GM10248 (cell line): ENCODE measurements at regions of chr4 and their contacts with region 1.

Region 1: GRCh38 chr4:15457406-15458201 is 12.1 kb upstream of the CC2D2A start:
- DNase-seq: peak; percentile 28
- CTCF ChIP-seq: peak; percentile 63

Region 2: GRCh38 chr4:15231265-15232091 is 226.1 kb before region 1 on chr4:
- CTCF ChIA-PET with region 1: interaction called, 32 read pairs
- POLR2A ChIA-PET with region 1: no interaction called
- DNase-seq: peak; percentile 61
- CTCF ChIP-seq: peak; percentile 69

Region 3: DNA sequence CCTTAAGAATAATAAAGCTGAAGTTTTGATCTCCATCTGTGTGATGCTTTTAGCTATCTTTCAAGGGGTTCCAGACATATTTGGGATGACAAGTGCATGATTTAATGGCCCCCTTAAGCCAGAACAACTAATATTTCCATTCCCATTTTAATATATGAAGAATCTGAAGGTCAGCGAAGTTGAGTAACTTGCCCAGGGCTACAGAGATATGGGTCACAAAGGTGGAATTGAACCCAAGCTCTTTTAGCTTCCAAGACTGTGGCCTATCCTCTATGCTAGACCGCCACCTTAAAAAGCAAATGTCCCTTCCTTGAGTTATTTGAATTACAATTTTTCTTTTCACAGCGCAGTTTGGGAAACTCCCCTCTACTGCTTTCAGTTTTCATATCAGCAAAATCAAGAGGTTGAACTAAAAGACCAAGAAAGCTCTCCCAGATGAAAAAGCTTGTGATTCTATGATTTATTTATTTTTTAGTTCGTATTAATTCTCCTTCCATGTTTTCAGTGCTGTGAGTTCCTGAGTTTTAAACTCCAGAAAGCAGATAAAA is 204.3 kb before region 1 on chr4:
- CTCF ChIA-PET with region 1: interaction called, 12 read pairs
- POLR2A ChIA-PET with region 1: no interaction called
- DNase-seq: peak; percentile 56
- CTCF ChIP-seq: no peak

Region 4: GRCh38 chr4:15427161-15427560 is 30.4 kb before region 1 on chr4:
- CTCF ChIA-PET with region 1: interaction called, 15 read pairs
- POLR2A ChIA-PET with region 1: no interaction called
- DNase-seq: no peak
- CTCF ChIP-seq: no peak

Region 5: DNA sequence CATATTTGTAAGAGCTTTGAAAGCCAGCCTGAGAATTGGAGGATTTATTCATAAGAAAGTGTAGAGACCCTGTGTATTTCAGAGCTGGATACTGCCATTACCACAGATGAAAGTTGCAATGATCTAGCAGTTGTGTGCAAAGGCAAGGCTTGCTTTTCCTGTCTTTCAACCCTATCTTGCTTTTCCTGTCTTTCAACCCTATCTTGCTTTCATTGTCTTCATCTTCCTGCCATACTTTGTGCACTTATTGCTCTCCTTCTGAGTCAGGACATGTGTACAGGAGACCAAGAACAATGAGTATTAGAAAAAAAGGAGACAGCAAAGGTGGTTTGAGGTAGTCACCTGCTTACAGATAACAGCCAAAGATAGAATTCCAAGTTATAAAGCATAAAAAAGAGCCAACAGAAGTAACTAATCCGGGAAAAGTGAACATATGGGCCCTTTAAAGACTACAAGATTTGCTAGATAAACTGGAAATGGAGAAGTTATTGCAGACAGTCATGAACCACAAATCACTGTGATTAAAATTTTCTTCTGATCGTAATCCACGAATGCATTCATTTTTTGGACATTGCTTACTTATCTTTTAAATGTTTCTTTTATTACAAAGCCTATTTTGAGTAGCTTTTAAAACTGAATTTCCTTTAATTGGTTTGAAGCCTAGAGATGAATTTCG is 12.6 kb before region 1 on chr4:
- CTCF ChIA-PET with region 1: interaction called, 17 read pairs
- POLR2A ChIA-PET with region 1: no interaction called
- DNase-seq: no peak
- CTCF ChIP-seq: no peak

Region 6: DNA sequence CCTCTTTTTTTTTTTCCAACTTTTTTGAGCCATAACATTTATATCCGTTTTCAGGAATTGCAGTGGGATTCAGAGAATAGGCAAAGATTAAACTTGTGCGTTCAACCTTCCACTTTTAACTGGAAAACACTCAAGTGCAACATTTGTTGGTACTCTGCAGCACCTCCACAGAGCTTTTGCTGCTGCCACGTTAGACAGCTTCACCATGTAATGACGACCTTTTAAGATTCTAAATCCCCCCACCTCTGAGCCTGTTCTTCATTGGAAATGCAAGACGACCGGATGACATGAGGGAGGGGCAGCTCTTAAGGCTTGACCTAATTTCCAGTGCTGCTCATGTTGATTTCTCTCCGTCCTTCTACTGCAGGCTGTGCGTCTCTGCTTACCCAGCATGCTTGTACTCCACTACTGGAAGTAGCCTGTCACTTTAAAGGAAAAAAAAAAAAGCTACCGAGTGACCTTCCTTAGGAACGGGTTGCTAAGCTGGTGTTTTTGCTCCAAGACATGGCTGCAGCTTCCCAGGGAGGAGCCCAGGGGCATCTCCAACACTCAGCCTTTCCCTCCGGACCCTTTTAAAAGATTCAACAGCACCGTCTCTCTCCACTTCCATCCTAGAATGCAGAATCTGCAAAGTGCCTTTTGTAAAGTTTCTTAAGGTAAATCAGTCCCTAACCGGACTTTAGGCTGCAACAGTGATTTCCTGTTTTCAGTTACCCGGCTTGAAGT is 12.0 kb after region 1 on chr4 and contains the start of gene CC2D2A:
- CTCF ChIA-PET with region 1: interaction called, 38 read pairs
- POLR2A ChIA-PET with region 1: no interaction called
- DNase-seq: no peak
- CTCF ChIP-seq: no peak

Region 7: GRCh38 chr4:15479089-15479912 is 21.7 kb after region 1 on chr4:
- CTCF ChIA-PET with region 1: interaction called, 17 read pairs
- POLR2A ChIA-PET with region 1: no interaction called
- DNase-seq: peak; percentile 54
- CTCF ChIP-seq: peak; percentile 69